Naive thymus-derived CD4-positive, alpha-beta T cell (primary cell): ENCODE measurements at regions of chr14 and their contacts with region 1.

Region 1: DNA sequence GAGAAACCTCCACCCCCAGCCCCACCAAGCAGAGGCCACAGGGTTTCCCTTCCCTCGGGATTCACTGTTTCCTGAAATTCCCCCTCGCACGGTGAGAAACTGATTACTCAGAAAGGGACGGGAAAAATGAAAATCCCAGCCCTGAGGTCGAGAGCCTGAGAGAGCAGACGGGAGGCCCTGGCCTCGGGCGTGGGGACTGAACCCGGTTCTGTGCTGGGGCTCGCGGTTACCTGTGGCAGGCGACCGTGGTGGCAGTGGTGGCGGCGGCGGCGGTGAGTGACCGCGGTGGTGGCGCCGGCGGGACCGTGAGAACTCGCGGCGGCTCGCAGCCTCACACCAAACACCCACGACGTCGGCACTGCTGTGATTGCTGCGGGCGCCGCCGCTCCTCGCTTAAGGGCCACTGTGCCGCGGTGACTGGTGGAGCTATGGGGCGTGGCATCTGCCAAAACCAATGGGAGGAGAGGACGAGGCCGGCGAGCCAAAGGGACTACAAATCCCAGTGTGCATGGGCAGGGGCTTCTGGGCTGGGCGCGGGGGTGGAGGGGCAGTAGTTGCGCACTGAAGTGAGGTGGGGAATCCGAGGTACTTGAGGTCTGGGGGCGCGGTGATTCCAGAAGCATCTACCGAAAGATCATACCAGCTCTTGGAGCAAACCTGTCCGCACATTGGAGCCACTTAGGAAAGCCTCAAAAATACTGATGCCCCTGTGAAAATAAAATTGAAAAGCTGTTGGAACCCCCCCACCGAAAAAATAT is at the start of gene LGMN:
- DNase-seq: peak; percentile 67 to 92 (median 86)
- ATAC-seq: peak; percentile 98
- H3K4me3 ChIP-seq: peak within 1 kb of the TSS; percentile 67
- H3K4me3 Mint-ChIP-seq: peak within 1 kb of the TSS; percentile 82 to 93 (median 89)
- H3K27ac ChIP-seq: peak within 1 kb of the TSS; percentile 73
- H3K27ac Mint-ChIP-seq: peak within 1 kb of the TSS in 8 of 9 donors; percentile 45 to 91 (median 78)
- H3K4me1 ChIP-seq: peaks cover 10 to 13% of the 10 kb centered on the region in 2 donors
- H3K4me1 Mint-ChIP-seq: peaks cover 28 to 53% (median 47%) of the 10 kb centered on the region in 7 donors
- H3K27me3 ChIP-seq: no peaks in the 10 kb centered on the region
- H3K27me3 Mint-ChIP-seq: peaks cover 0 to 77% (median 15%) of the 10 kb centered on the region in 5 donors
- total RNA-seq, gene LGMN: 8.7 to 28.7 (median 10.1) TPM

Region 2: DNA sequence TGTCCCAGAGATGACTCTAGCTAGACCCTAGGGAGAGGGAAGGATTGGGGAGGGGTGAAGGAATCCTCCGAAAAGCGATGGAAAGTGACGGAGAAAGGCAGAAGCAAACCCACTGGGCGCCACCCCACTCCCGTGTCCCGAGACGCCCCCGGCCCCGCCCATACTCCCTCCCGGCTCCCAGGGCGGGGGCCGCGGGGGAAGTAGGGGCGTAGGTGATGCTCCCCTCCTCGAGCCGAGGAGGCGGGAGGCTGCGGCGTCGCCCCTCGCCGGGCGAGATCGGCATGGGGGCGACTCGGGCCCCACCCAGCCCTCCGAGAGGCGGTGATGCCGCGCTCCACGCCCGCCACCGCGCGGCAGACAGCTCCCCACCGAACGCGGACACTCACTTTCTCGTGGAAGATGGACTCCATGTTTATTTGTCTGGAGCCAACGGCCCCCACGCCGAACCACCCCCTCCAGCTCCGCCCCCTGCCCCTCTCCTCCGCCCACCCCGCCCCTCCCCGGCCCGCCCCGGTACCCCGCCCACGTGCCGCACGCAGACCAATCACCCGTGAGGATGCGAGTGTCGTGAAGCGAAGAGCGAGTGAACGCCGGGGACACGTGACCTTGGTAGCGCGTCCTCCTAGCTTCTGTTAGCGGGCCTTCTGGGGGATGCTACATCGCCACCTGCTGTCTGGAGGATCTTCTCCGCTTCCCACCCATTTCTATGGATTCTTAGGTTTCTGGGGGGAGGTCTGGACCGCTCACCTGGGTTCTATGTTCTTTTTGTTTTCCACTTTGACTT is 642.1 kb before region 1 on chr14 and contains the start of gene ATXN3:
- CTCF ChIA-PET with region 1: no interaction called
- POLR2A ChIA-PET with region 1: no interaction called
- intact Hi-C with region 1: loop called in 1 of 2 experiments (anchors 5 kb)
- DNase-seq: peak; percentile 75 to 97 (median 93)
- ATAC-seq: peak; percentile 95
- H3K4me3 ChIP-seq: peak within 1 kb of the TSS; percentile 82
- H3K4me3 Mint-ChIP-seq: peak within 1 kb of the TSS; percentile 88 to 100 (median 98)
- H3K27ac ChIP-seq: peak within 1 kb of the TSS; percentile 91
- H3K27ac Mint-ChIP-seq: peak within 1 kb of the TSS; percentile 82 to 96 (median 92)
- H3K4me1 ChIP-seq: peaks cover 5 to 17% of the 10 kb centered on the region in 2 donors
- H3K4me1 Mint-ChIP-seq: peaks cover 39 to 72% (median 61%) of the 10 kb centered on the region in 7 donors
- H3K27me3 ChIP-seq: no peaks in the 10 kb centered on the region
- H3K27me3 Mint-ChIP-seq: no peaks in the 10 kb centered on the region
- total RNA-seq, gene ATXN3: 27.8 to 54.9 (median 36.9) TPM

Region 3: GRCh38 chr14:92686900-92687444 is 61.5 kb before region 1 on chr14:
- CTCF ChIA-PET with region 1: interaction called, 3 read pairs
- POLR2A ChIA-PET with region 1: no interaction called
- intact Hi-C with region 1: loop called in 1 of 2 experiments (anchors 5 kb)
- DNase-seq: peak; percentile 20 to 84 (median 52)
- ATAC-seq: peak; percentile 89
- H3K4me3 ChIP-seq: no peak overlapping the region
- H3K4me3 Mint-ChIP-seq: no peak overlapping the region
- H3K27ac ChIP-seq: no peak overlapping the region
- H3K27ac Mint-ChIP-seq: peak overlapping the region in 2 of 9 donors; percentile 43
- H3K4me1 ChIP-seq: no peaks in the 10 kb centered on the region
- H3K4me1 Mint-ChIP-seq: peaks cover 0 to 5% (median 0%) of the 10 kb centered on the region in 7 donors
- H3K27me3 ChIP-seq: no peaks in the 10 kb centered on the region
- H3K27me3 Mint-ChIP-seq: no peaks in the 10 kb centered on the region

Region 4: DNA sequence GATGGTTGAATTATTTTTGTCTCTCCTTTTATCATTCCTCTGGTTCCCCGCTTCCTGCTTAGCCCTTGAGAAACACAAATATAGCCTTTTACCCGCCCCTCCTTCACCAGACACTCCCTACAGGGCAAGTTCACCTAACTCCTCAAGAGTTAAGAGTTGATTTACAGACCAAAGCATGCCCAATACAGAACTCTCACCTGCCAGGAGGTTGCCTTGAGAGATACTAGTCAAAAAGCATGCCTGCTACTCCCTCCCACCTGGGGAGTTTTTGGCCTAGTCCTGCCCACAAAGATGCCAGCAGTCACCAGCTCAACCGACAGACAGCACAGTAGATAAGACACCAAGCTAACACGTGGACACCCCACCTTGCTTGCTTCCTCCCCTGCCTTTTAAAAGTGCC is 11.2 kb before region 1 on chr14:
- CTCF ChIA-PET with region 1: no interaction called
- POLR2A ChIA-PET with region 1: interaction called, 5 read pairs
- intact Hi-C with region 1: loop called in 1 of 2 experiments (anchors 2 kb)
- DNase-seq: peak in 5 of 9 donors; percentile 12 to 37 (median 23)
- ATAC-seq: peak; percentile 85
- H3K4me3 ChIP-seq: no peak overlapping the region
- H3K4me3 Mint-ChIP-seq: peak overlapping the region; percentile 22 to 76 (median 48)
- H3K27ac ChIP-seq: peak overlapping the region; percentile 15
- H3K27ac Mint-ChIP-seq: peak overlapping the region; percentile 36 to 91 (median 78)
- H3K4me1 ChIP-seq: peaks cover 0 to 15% of the 10 kb centered on the region in 2 donors
- H3K4me1 Mint-ChIP-seq: peaks cover 13 to 29% (median 18%) of the 10 kb centered on the region in 7 donors
- H3K27me3 ChIP-seq: no peaks in the 10 kb centered on the region
- H3K27me3 Mint-ChIP-seq: peaks cover 0 to 26% (median 0%) of the 10 kb centered on the region in 5 donors

Region 5: GRCh38 chr14:92783816-92784431 is 35.5 kb after region 1 on chr14:
- CTCF ChIA-PET with region 1: interaction called, 4 read pairs
- POLR2A ChIA-PET with region 1: interaction called, 3 read pairs
- intact Hi-C with region 1: loop called (anchors 2 to 5 kb)
- DNase-seq: peak in 7 of 9 donors; percentile 31 to 65 (median 47)
- ATAC-seq: peak; percentile 81
- H3K4me3 ChIP-seq: no peak overlapping the region
- H3K4me3 Mint-ChIP-seq: no peak overlapping the region
- H3K27ac ChIP-seq: no peak overlapping the region
- H3K27ac Mint-ChIP-seq: no peak overlapping the region
- H3K4me1 ChIP-seq: no peaks in the 10 kb centered on the region
- H3K4me1 Mint-ChIP-seq: peaks cover 0 to 20% (median 0%) of the 10 kb centered on the region in 7 donors
- H3K27me3 ChIP-seq: no peaks in the 10 kb centered on the region
- H3K27me3 Mint-ChIP-seq: peaks cover 0 to 4% (median 0%) of the 10 kb centered on the region in 5 donors